ENCODE measurements at regions of chr15 and their contacts with region 1.

Region 1: DNA sequence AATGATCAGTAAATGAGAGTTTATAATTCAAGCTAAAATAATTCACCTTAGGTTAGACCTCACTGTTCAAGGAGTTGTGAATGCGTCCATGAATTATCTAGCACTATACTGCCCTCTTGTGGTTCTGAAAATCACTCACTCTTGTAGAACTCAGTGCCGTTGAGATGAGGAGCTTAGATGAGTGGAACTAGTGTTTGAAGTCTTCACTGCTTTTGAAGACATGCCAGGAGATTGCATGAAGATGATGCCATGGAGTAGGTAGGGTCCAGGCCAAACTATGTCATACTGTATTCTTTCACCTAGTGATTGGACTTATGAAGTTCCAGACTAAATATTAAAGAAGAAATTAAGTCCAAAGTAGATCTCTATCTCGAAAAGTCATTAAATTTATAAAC is 28.8 kb downstream of the LYSMD4 start:
- DNase-seq: peak; percentile 78 to 90
- ATAC-seq: peak; percentile 78 to 95
- H3K4me3 ChIP-seq: no peak overlapping the region
- H3K27ac ChIP-seq: peak overlapping the region in 1 of 2 experiments; percentile 71; a peak in 2 of 6 replicates
- H3K4me1 ChIP-seq: peaks cover 35% of the 10 kb centered on the region
- CTCF ChIP-seq: peak; percentile 84
- EP300 ChIP-seq: no peak
- POLR2A ChIP-seq: no peak
- RAD21 ChIP-seq: peak; percentile 93 to 95

Region 2: GRCh38 chr15:99275525-99276128 is 428.8 kb before region 1 on chr15:
- CTCF ChIA-PET with region 1: interaction called, 225 read pairs
- POLR2A ChIA-PET with region 1: interaction called, 3 read pairs
- DNase-seq: no peak
- ATAC-seq: no peak
- H3K4me3 ChIP-seq: no peak overlapping the region
- H3K27ac ChIP-seq: no peak overlapping the region
- H3K4me1 ChIP-seq: no peaks in the 10 kb centered on the region
- CTCF ChIP-seq: no peak
- EP300 ChIP-seq: no peak
- POLR2A ChIP-seq: no peak
- RAD21 ChIP-seq: no peak

Region 3: DNA sequence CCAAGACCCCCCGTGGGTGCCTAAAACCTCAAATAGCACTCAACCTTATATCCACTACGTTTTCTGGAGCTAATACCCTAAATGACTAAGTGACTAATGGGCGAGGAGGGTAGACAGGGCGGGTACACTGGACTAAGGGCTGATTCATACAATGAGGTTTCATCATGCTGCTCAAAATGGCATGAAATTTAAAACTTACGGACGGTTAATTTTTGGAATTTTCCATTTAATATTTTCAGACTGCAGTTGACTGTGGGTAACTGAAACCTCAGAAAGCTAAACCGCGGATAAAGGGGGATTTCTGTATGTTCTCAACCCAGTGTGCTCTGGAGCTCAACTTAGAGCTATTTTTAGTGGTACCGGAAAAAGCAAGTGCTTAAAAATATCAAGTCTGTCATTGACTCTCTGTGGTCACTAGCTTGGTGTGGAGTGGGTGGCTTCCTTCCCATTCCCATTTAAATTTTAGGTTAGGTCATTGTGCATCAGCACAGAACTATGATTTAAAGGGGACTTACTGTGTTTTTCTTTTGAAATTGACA is 380.3 kb before region 1 on chr15:
- CTCF ChIA-PET with region 1: interaction called, 15 read pairs
- POLR2A ChIA-PET with region 1: no interaction called
- DNase-seq: peak; percentile 51 to 92
- ATAC-seq: peak; percentile 93 to 96
- H3K4me3 ChIP-seq: peak overlapping the region; percentile 9
- H3K27ac ChIP-seq: peak overlapping the region; percentile 87 to 91
- H3K4me1 ChIP-seq: peaks cover 79% of the 10 kb centered on the region
- CTCF ChIP-seq: no peak
- EP300 ChIP-seq: peak in 1 of 2 experiments; percentile 69; a peak in 2 of 5 replicates
- POLR2A ChIP-seq: no peak
- RAD21 ChIP-seq: peak in 1 of 2 experiments; percentile 31; a peak in 2 of 5 replicates

Region 4: GRCh38 chr15:99409097-99409473 is 295.4 kb before region 1 on chr15:
- CTCF ChIA-PET with region 1: interaction called, 94 read pairs
- POLR2A ChIA-PET with region 1: no interaction called
- DNase-seq: peak; percentile 75 to 76
- ATAC-seq: peak; percentile 93 to 95
- H3K4me3 ChIP-seq: no peak overlapping the region
- H3K27ac ChIP-seq: peak overlapping the region in 1 of 2 experiments; percentile 42; a peak in 2 of 6 replicates
- H3K4me1 ChIP-seq: peaks cover 17% of the 10 kb centered on the region
- CTCF ChIP-seq: peak; percentile 59
- EP300 ChIP-seq: no peak
- POLR2A ChIP-seq: no peak
- RAD21 ChIP-seq: peak; percentile 76 to 82

Region 5: GRCh38 chr15:99476413-99477222 is 227.8 kb before region 1 on chr15:
- CTCF ChIA-PET with region 1: interaction called, 13 read pairs
- POLR2A ChIA-PET with region 1: no interaction called
- DNase-seq: peak; percentile 85 to 87
- ATAC-seq: peak; percentile 91 to 96
- H3K4me3 ChIP-seq: 0 out of 3 replicates have a peak overlapping the region, but pooled peaks have one; percentile 3
- H3K27ac ChIP-seq: peak overlapping the region; percentile 62 to 81
- H3K4me1 ChIP-seq: peaks cover 21% of the 10 kb centered on the region
- CTCF ChIP-seq: no peak
- EP300 ChIP-seq: no peak
- POLR2A ChIP-seq: no peak
- RAD21 ChIP-seq: peak; percentile 26 to 35; a peak in 1 of 5 replicates

Region 6: DNA sequence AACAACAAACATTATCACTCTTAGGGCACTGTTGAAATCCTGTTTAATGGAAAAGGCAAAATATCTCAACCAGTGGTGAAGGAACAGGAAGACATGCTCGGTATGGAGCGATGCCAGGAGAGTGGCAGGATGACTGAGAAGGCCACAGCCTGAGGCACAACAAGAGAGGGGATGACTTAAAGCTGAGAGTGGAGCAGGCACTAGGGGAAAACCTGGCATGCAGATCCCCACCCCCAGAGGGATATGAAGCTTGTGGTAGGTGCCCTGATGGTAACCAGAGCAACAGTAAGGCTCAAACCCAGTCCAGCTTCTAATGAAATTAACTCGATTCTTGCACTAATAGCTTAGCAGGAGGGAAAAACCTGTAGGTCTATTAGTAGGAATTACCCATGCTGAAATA is 11.6 kb before region 1 on chr15:
- CTCF ChIA-PET with region 1: interaction called, 23 read pairs
- POLR2A ChIA-PET with region 1: no interaction called
- DNase-seq: no peak
- ATAC-seq: no peak
- H3K4me3 ChIP-seq: no peak overlapping the region
- H3K27ac ChIP-seq: no peak overlapping the region
- H3K4me1 ChIP-seq: no peaks in the 10 kb centered on the region
- CTCF ChIP-seq: no peak
- EP300 ChIP-seq: no peak
- POLR2A ChIP-seq: no peak
- RAD21 ChIP-seq: no peak

Region 7: DNA sequence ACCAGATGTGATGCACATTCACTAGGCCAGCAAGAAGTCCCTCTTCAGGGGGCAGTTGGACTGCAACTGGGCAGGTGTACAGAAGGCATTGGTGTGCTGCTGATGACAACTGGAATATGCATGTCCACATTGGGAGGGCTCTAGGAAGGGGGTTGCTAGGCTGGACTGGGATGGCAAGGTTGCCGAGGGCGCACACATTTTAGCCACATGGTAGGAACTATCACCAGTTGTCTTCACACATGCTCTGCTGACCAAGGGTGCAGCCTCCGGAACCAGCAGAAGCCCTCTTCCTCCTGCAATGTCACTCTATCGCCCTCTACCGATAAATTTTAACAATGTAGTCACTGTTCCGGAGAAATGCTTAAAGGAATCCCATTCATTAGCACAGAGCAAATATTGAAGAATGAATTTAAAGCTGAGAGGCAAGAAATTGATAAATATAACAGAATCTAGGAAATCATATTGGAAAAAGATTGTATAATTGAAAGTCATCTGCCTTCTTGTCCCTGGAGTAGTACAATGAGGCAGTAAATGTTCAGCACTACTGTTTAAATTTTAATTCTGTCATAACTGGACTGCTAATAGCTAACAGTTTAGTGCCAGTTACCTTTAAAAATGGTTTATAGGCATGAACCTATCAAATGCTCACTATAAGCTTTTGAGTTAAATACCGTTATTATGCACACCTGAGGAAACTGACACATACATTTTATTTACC is 51.4 kb after region 1 on chr15:
- CTCF ChIA-PET with region 1: interaction called, 31 read pairs
- POLR2A ChIA-PET with region 1: no interaction called
- DNase-seq: peak; percentile 71 to 84
- ATAC-seq: peak; percentile 85 to 96
- H3K4me3 ChIP-seq: no peak overlapping the region
- H3K27ac ChIP-seq: no peak overlapping the region
- H3K4me1 ChIP-seq: no peaks in the 10 kb centered on the region
- CTCF ChIP-seq: peak; percentile 90
- EP300 ChIP-seq: no peak
- POLR2A ChIP-seq: no peak
- RAD21 ChIP-seq: peak; percentile 89 to 94

Measured in A549 (cell line).